HepG2 (cell line): ENCODE measurements at regions of chr10 and their contacts with region 1.

Region 1: DNA sequence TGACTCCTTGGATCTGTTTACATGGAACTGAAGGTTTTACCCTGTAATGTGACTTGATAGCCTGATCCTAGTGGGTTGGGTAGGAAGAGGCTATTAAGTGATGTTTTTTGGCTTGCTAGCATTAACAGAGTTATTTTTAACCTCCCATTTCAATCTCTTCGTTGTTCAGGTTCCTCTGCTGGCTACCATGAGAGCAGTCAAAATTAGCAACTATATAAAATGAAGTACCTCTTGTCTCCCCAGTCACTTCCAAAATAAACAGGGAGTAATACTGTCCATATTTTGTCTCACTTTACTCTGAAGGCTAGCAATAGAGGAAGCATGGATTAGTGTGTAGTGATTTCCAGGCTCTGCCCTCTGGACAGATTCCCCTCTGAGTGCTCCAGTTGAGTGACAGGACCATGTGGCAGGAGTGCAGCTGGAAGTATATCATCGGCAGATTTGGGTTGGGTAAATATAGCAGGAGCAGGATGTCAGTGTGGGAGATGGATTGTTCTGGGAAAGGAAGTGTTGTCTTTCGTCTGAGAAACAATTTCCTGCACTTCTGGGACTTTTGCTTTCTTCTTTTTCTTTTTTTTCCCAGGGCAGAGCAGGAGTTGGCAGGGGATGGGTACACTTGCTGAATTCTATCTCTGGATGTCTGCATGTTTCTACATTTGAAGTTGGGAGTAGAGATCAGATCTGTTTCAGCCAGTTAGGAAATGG is 35.2 kb downstream of the GBF1 start:
- DNase-seq: no peak
- ATAC-seq: no peak
- H3K4me3 ChIP-seq: no peak overlapping the region
- H3K27ac ChIP-seq: no peak overlapping the region
- H3K4me1 ChIP-seq: peaks cover 9% of the 10 kb centered on the region
- H3K27me3 ChIP-seq: no peaks in the 10 kb centered on the region
- CTCF ChIP-seq: no peak
- EP300 ChIP-seq: no peak
- POLR2A ChIP-seq: no peak
- RAD21 ChIP-seq: no peak

Region 2: DNA sequence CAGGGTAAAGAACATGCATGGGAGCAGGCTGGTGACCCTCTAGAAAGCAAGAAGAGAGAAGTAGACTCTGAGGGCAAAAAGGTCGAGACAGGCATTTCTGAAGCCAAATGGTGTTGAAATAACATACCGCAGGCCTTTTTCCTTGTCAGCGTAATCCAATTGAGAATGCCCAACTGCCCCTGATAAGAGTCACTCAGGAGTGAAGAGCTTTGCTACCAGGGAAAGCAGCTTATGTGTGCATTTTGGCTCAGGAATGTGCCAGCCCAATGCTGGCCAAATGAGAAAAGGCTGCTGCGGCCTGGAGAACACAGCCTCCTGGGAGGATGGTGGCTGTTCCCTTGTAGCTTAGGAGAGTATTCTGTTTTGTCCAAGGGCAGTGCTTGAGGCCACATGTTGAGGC is 53.6 kb after region 1 on chr10:
- CTCF ChIA-PET with region 1: no interaction called
- POLR2A ChIA-PET with region 1: no interaction called
- in situ Hi-C with region 1: no loop called
- intact Hi-C with region 1: loop called (anchors 10 kb)
- DNase-seq: no peak
- ATAC-seq: no peak
- H3K4me3 ChIP-seq: no peak overlapping the region
- H3K27ac ChIP-seq: no peak overlapping the region
- H3K4me1 ChIP-seq: 0 out of 2 replicates have a peak, but pooled peaks cover under 1% of the 10 kb centered on the region
- H3K27me3 ChIP-seq: no peaks in the 10 kb centered on the region; a peak in 1 of 5 replicates
- CTCF ChIP-seq: no peak
- EP300 ChIP-seq: no peak
- POLR2A ChIP-seq: no peak
- RAD21 ChIP-seq: no peak

Region 3: DNA sequence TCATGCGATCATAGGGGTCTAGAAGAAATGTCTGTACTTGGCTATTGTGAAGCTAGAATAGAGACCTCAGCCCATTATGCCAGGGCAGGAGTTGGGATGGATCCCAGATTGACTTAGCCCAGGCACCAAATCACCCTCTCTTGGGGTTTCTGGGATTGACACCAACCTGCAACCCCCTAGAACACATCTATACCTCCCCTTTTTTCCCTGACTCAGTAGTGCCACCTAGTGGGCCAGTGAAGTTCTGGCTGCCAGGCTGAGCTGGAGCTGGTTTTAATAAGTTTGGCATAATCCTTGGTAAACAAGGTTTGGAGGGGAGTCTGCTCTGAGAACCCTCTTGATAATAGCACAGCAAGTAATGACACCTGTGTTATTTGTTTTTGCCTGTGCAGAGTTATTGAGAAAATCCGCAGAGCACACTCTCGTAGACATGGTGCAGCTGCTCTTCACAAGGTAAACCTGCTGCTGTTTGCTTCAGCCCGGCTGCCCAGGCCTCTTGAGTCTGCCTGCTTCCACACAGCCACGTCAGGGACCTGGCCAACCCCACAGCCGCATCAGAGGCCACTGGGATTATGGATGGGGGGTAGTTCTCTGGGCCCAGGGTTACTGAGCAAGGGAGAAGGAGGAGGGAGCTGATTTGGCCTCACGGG is 71.6 kb after region 1 on chr10:
- CTCF ChIA-PET with region 1: no interaction called
- POLR2A ChIA-PET with region 1: no interaction called
- in situ Hi-C with region 1: no loop called
- intact Hi-C with region 1: no loop called
- DNase-seq: peak; percentile 51
- ATAC-seq: peak; percentile 80
- H3K4me3 ChIP-seq: no peak overlapping the region
- H3K27ac ChIP-seq: no peak overlapping the region
- H3K4me1 ChIP-seq: no peaks in the 10 kb centered on the region
- H3K27me3 ChIP-seq: no peaks in the 10 kb centered on the region
- CTCF ChIP-seq: peak; percentile 84
- EP300 ChIP-seq: no peak
- POLR2A ChIP-seq: no peak
- RAD21 ChIP-seq: peak; percentile 61